A549 (cell line): ENCODE measurements at regions of chr1 and their contacts with region 1.

Region 1: GRCh38 chr1:6794164-6794563 is 8.9 kb downstream of the CAMTA1 start:
- DNase-seq: peak; percentile 25 to 53
- ATAC-seq: 0 out of 6 replicates have a peak, but pooled peaks of 1 of the 2 experiments have one; percentile 32
- H3K4me3 ChIP-seq: no peak overlapping the region
- H3K27ac ChIP-seq: peak overlapping the region; percentile 66 to 91; a peak in 5 of 6 replicates
- H3K4me1 ChIP-seq: peaks cover 44% of the 10 kb centered on the region
- CTCF ChIP-seq: peak; percentile 65
- EP300 ChIP-seq: no peak
- POLR2A ChIP-seq: no peak
- RAD21 ChIP-seq: peak; percentile 73 to 78

Region 2: DNA sequence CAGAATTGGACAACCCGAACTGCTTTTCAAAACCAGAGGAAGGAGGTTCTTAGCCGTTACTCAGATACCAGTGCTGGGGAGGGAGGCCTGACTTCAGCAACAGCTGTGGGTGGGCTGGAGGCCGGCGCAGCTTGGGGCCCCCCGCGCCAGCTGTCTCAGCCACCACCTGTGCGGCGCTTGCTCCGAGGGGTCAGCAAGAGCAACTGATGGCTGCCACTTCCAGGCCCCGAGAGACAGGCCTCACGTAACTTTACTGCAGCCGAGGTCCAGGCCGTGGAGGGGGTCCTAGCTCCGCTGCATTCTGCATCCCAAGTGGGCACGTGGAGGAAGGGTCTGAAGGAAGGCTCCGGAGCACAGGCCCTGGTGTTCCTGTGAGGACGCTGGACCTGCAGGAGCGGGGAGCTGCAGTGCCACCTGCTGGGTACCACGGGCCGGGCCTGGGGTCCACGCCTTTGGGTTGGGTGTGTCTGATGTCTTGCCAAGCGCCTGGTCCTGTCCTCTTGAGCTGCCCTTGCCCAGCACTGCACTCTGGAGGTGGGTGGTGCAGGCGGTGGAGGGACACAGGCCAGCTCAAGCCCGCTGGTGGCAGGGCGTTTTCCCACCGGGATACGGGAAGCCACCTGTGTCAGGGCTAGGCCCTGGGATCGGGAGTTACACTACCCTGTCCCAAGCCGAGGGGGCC is 159.7 kb before region 1 on chr1:
- CTCF ChIA-PET with region 1: no interaction called
- POLR2A ChIA-PET with region 1: no interaction called
- DNase-seq: peak; percentile 38 to 61
- ATAC-seq: peak; percentile 77 to 86
- H3K4me3 ChIP-seq: no peak overlapping the region
- H3K27ac ChIP-seq: no peak overlapping the region
- H3K4me1 ChIP-seq: no peaks in the 10 kb centered on the region
- CTCF ChIP-seq: peak; percentile 35; the same call in 2 of the 3 replicates
- EP300 ChIP-seq: no peak
- POLR2A ChIP-seq: no peak
- RAD21 ChIP-seq: peak; percentile 39 to 42; a peak in 3 of 5 replicates

Region 3: GRCh38 chr1:6832531-6833188 is 38.5 kb after region 1 on chr1:
- CTCF ChIA-PET with region 1: no interaction called
- POLR2A ChIA-PET with region 1: no interaction called
- DNase-seq: no peak
- ATAC-seq: no peak
- H3K4me3 ChIP-seq: no peak overlapping the region
- H3K27ac ChIP-seq: no peak overlapping the region
- H3K4me1 ChIP-seq: 0 out of 3 replicates have a peak, but pooled peaks cover 4% of the 10 kb centered on the region
- CTCF ChIP-seq: no peak
- EP300 ChIP-seq: no peak
- POLR2A ChIP-seq: no peak
- RAD21 ChIP-seq: no peak

Region 4: DNA sequence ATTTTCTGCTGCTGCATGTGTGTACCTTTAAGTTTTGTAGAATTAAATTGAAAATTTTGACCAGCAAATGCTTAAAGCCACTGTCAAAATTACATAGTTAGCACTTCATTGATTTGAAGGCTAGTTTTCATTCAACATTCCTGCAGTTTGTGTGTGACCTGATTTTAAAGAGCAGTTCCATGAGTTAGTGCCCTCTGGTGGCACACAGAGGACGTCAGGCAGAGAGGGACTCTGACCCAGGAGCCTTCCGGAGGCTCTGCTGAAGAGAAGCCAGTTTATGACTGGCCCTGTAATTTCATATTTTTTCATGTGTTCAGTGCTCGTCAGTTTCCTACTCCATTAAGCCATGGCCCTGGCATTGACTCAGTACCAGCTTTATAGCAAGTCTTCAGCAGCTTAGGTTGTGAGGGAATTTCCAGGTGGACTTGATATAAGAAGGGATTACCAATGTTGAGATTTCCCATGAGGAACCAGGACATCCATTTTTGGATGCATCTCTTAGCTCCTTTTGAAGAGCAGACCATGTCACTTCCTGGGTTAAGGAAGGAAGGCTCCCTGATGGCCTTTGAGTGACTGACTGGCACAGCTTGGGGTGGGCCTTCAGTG is 95.8 kb after region 1 on chr1:
- CTCF ChIA-PET with region 1: interaction called, 11 read pairs
- POLR2A ChIA-PET with region 1: no interaction called
- DNase-seq: peak; percentile 14 to 51
- ATAC-seq: peak; percentile 90 to 92; a peak in 5 of 6 replicates
- H3K4me3 ChIP-seq: no peak overlapping the region
- H3K27ac ChIP-seq: no peak overlapping the region
- H3K4me1 ChIP-seq: peaks cover 10% of the 10 kb centered on the region
- CTCF ChIP-seq: peak; percentile 72
- EP300 ChIP-seq: no peak
- POLR2A ChIP-seq: no peak
- RAD21 ChIP-seq: peak; percentile 60 to 62

Region 5: DNA sequence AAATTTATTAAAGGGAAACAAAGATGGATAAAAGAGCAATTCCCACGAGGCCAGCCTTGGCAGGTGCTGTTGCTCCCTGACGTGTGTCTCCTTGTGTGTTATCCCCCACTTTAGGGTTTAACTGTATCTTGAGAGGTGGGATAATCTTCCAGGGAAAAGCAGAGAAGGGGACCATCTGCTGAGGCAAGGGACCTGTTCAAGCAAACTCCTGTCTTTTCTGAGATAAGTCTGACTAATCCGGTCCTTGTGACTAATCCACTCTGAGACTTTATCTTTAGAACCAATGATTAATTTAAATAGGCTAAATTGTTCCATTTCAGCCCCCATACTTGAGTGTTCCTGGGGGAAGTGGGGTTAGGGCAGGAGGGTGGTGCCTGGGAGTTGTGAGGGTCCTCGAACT is 154.7 kb after region 1 on chr1:
- CTCF ChIA-PET with region 1: no interaction called
- POLR2A ChIA-PET with region 1: no interaction called
- DNase-seq: no peak
- ATAC-seq: no peak
- H3K4me3 ChIP-seq: no peak overlapping the region
- H3K27ac ChIP-seq: no peak overlapping the region
- H3K4me1 ChIP-seq: no peaks in the 10 kb centered on the region
- CTCF ChIP-seq: no peak
- EP300 ChIP-seq: no peak
- POLR2A ChIP-seq: no peak
- RAD21 ChIP-seq: no peak